GM23248 (cell line): ENCODE measurements at regions of chr12 and their contacts with region 1.

Region 1: DNA sequence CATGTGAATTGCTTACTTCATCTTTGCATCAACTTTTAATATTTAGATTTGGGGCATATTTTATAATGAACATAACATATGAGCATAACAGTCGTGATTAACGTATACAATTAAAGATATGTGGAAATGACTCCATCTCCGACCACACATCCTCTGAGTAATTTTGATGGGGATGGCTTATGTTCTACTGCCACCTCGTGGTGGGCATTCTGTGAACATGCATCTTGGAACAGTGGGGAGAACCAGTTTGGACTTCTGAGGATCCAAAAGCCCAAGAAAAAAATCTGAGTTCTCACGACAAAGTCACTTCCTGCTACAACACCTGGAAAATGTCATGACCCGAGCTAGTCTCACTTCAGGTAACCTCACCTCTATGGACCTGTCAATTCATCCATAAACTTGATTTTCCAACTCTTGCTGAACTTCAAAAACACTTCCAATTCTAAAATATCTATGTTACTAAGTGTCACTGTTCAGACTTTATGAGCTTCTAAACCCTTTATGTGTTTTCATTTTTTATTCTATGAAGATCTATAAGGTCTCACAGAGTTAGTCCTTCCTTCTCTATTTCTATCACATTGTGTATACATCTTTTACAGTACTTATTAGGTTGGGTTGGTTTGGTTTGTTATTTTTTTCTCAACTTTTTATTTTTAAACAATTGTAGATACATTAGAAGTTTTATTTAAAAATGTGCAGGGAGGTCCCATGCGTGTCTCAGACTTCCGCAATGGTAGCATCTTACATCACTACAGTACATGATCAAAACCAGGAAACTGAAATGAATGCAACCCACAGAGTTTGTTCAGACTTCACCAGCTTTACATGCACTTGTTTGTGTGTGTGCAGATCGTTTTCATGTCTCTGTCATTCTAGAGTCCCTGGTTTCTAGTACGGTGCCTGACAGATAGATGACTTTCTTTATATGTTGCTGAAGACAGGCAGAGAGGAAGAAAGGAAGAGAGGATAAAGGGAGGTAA is 38.2 kb upstream of the STAB2 start:
- DNase-seq: peak; percentile 80
- H3K4me3 ChIP-seq: no peak overlapping the region
- H3K27ac ChIP-seq: no peak overlapping the region
- H3K4me1 ChIP-seq: no peaks in the 10 kb centered on the region
- H3K27me3 ChIP-seq: peaks cover 5% of the 10 kb centered on the region; the same call in 1 of the 2 replicates

Region 2: GRCh38 chr12:102883204-102883799 is 665.6 kb before region 1 on chr12:
- in situ Hi-C with region 1: loop called (anchors 10 kb)
- DNase-seq: peak; percentile 72
- H3K4me3 ChIP-seq: no peak overlapping the region
- H3K27ac ChIP-seq: no peak overlapping the region
- H3K4me1 ChIP-seq: no peaks in the 10 kb centered on the region
- H3K27me3 ChIP-seq: no peaks in the 10 kb centered on the region